Activated B cell treated with CpG ODN at 0.5 μM for 24 hours (primary cell): ENCODE measurements at regions of chr12 and their contacts with region 1.

Region 1: GRCh38 chr12:54279866-54280467 is at the start of gene CBX5:
- DNase-seq: peak; percentile 97
- ATAC-seq: peak; percentile 40
- H3K4me3 Mint-ChIP-seq: no peak within 1 kb of the TSS
- H3K27ac Mint-ChIP-seq: no peak within 1 kb of the TSS
- H3K4me1 Mint-ChIP-seq: peaks cover 64% of the 10 kb centered on the region
- H3K27me3 Mint-ChIP-seq: no peaks in the 10 kb centered on the region
- CTCF ChIP-seq: no peak
- total RNA-seq, gene CBX5: 77.3 TPM in 2 replicates

Region 2: DNA sequence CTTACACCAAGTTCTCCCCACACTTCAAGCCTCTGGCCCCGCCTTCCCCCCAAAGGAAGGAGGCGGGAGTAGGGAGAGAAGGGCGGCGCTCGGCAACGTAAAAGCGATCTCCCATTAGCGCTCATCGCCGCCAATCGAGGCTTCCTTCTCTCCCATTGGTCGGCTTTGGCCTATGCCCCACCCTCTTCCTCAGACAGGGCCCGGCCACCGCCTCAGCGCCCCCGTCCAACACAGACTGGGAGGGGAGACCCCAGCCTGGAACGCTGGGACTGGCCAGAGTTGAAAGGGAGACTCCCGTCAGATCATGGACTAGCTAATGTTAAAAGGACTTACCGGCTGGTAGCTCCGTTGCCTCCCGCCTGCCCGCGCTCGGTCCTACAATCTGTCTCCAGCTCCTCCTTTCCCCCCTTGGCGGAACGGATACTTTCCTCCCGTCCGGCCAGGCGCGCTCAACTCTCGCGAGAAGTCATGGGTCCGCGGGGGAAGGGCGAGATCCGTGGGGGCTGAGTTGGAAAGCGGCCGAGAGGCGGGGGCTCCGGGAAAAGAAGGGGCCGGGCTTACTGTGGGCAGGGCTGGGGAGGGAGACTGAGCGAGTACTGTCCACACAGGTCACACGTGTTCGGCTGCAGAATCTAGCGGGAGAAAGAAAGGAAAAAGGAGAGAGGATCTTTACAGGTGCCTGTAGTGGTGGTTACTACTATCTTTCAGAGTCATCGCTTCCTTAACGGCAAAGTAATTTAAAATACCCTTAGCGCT is 653.8 kb before region 1 on chr12 and contains the start of gene ATF7:
- CTCF ChIA-PET with region 1: no interaction called
- POLR2A ChIA-PET with region 1: no interaction called
- intact Hi-C with region 1: loop called (anchors 1 kb)
- DNase-seq: peak; percentile 98
- ATAC-seq: peak; percentile 91
- H3K4me3 Mint-ChIP-seq: peak within 1 kb of the TSS; percentile 98
- H3K27ac Mint-ChIP-seq: peak within 1 kb of the TSS; percentile 99
- H3K4me1 Mint-ChIP-seq: peaks cover 43% of the 10 kb centered on the region
- H3K27me3 Mint-ChIP-seq: no peaks in the 10 kb centered on the region
- CTCF ChIP-seq: no peak
- total RNA-seq, gene ATF7: 29.5 and 36.8 TPM in 2 replicates

Region 3: DNA sequence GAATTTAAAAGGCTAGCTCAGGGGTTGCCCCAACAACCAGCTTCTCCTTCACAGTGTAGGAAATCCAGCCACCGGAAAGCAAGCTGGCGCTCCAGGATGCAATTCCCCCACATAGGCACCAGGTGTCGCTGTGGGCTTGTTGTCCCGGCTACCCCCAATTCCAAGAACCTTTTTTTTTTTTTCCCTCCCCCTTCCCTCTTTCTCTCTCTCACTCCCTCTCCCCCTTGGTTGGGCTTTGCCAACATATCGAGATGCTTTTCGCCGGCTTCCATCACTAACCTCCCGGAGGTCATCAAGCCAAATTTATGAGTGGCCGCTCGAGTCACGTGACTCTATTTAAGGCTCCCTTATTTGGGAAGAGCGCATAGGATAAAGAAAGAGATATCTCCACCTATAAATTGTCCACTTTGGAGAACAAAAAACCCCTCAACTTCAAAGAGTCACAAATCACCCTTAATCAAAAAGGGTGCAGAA is 247.3 kb before region 1 on chr12 and contains the start of gene HOXC5:
- CTCF ChIA-PET with region 1: no interaction called
- POLR2A ChIA-PET with region 1: no interaction called
- intact Hi-C with region 1: no loop called
- DNase-seq: peak; percentile 51
- ATAC-seq: peak; percentile 63
- H3K4me3 Mint-ChIP-seq: peak within 1 kb of the TSS; percentile 70
- H3K27ac Mint-ChIP-seq: peak within 1 kb of the TSS; percentile 24
- H3K4me1 Mint-ChIP-seq: peaks cover 30% of the 10 kb centered on the region
- H3K27me3 Mint-ChIP-seq: peaks cover 57% of the 10 kb centered on the region
- CTCF ChIP-seq: peak; percentile 66
- total RNA-seq, gene HOXC5: not detected in 2 replicates

Region 4: GRCh38 chr12:54214553-54215406 is 65.2 kb before region 1 on chr12:
- CTCF ChIA-PET with region 1: no interaction called
- POLR2A ChIA-PET with region 1: interaction called, 28 read pairs
- intact Hi-C with region 1: loop called (anchors 1 kb)
- DNase-seq: peak; percentile 87
- ATAC-seq: peak; percentile 85
- H3K4me3 Mint-ChIP-seq: peak overlapping the region; percentile 83
- H3K27ac Mint-ChIP-seq: no peak overlapping the region
- H3K4me1 Mint-ChIP-seq: peaks cover 45% of the 10 kb centered on the region
- H3K27me3 Mint-ChIP-seq: peaks cover 5% of the 10 kb centered on the region
- CTCF ChIP-seq: peak; percentile 97

Region 5: DNA sequence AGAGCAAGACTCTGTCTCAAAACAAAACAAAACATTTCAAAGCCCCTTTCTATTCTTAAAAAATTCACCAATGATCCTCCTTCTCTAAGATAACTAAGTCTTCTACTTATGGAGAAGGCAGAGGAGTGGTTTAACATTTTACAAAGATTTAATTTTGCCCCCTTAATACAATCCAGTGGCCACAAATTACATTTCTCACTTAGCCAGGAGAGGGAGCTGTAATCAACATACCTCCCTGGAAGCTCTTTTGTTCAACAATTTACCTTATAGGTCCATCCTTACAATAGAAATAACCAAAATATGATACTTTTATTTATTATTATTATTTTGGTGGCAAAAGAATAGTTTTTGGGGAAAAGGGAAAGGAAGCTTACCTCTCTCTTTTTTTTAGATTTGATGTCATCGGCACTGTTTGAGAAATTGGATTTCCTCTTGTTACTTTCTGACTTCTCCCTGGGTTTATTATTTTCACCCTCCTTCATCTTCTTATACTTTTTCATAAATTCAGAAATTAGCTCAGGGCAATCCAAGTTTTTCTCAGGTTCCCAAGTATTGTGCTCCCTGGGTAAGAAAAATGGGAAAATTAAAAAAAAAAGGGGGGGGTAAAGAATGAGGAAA is 28.2 kb before region 1 on chr12:
- CTCF ChIA-PET with region 1: interaction called, 7 read pairs
- POLR2A ChIA-PET with region 1: interaction called, 19 read pairs
- intact Hi-C with region 1: no loop called
- DNase-seq: no peak
- ATAC-seq: peak; percentile 74
- H3K4me3 Mint-ChIP-seq: no peak overlapping the region
- H3K27ac Mint-ChIP-seq: no peak overlapping the region
- H3K4me1 Mint-ChIP-seq: peaks cover 7% of the 10 kb centered on the region
- H3K27me3 Mint-ChIP-seq: no peaks in the 10 kb centered on the region
- CTCF ChIP-seq: peak; percentile 30

Region 6: GRCh38 chr12:54304187-54304810 is 24.3 kb after region 1 on chr12:
- CTCF ChIA-PET with region 1: no interaction called
- POLR2A ChIA-PET with region 1: interaction called, 12 read pairs
- intact Hi-C with region 1: no loop called
- DNase-seq: peak; percentile 54
- ATAC-seq: peak; percentile 94
- H3K4me3 Mint-ChIP-seq: peak overlapping the region; percentile 69
- H3K27ac Mint-ChIP-seq: no peak overlapping the region
- H3K4me1 Mint-ChIP-seq: peaks cover 36% of the 10 kb centered on the region
- H3K27me3 Mint-ChIP-seq: peaks cover 37% of the 10 kb centered on the region
- CTCF ChIP-seq: no peak

Region 7: GRCh38 chr12:54497883-54498282 is 217.9 kb after region 1 on chr12:
- CTCF ChIA-PET with region 1: no interaction called
- POLR2A ChIA-PET with region 1: interaction called, 19 read pairs
- intact Hi-C with region 1: loop called (anchors 5 kb)
- DNase-seq: no peak
- ATAC-seq: peak; percentile 4
- H3K4me3 Mint-ChIP-seq: peak overlapping the region; percentile 98
- H3K27ac Mint-ChIP-seq: peak overlapping the region; percentile 97
- H3K4me1 Mint-ChIP-seq: peaks cover 49% of the 10 kb centered on the region
- H3K27me3 Mint-ChIP-seq: no peaks in the 10 kb centered on the region
- CTCF ChIP-seq: no peak

Region 8: GRCh38 chr12:54579696-54580333 is 299.8 kb after region 1 on chr12:
- CTCF ChIA-PET with region 1: no interaction called
- POLR2A ChIA-PET with region 1: no interaction called
- intact Hi-C with region 1: no loop called
- DNase-seq: peak; percentile 79
- ATAC-seq: peak; percentile 99
- H3K4me3 Mint-ChIP-seq: no peak overlapping the region
- H3K27ac Mint-ChIP-seq: no peak overlapping the region
- H3K4me1 Mint-ChIP-seq: peaks cover 6% of the 10 kb centered on the region
- H3K27me3 Mint-ChIP-seq: peaks cover 14% of the 10 kb centered on the region
- CTCF ChIP-seq: peak; percentile 80